Activated CD8-positive, alpha-beta memory T cell treated with anti-CD3 and anti-CD28 coated beads, Interleukin-2, amount 10 ng/mL, durations not matched to agents 7 days and 5 days (primary cell): ENCODE measurements at regions of chr3 and their contacts with region 1.

Region 1: GRCh38 chr3:12175844-12176453 is 17.2 kb upstream of the TIMP4 start:
- DNase-seq: peak; percentile 59
- ATAC-seq: peak; percentile 67
- H3K4me3 Mint-ChIP-seq: no peak overlapping the region
- H3K27ac Mint-ChIP-seq: no peak overlapping the region
- H3K4me1 Mint-ChIP-seq: peaks cover 6% of the 10 kb centered on the region
- H3K27me3 Mint-ChIP-seq: peaks cover under 1% of the 10 kb centered on the region

Region 2: DNA sequence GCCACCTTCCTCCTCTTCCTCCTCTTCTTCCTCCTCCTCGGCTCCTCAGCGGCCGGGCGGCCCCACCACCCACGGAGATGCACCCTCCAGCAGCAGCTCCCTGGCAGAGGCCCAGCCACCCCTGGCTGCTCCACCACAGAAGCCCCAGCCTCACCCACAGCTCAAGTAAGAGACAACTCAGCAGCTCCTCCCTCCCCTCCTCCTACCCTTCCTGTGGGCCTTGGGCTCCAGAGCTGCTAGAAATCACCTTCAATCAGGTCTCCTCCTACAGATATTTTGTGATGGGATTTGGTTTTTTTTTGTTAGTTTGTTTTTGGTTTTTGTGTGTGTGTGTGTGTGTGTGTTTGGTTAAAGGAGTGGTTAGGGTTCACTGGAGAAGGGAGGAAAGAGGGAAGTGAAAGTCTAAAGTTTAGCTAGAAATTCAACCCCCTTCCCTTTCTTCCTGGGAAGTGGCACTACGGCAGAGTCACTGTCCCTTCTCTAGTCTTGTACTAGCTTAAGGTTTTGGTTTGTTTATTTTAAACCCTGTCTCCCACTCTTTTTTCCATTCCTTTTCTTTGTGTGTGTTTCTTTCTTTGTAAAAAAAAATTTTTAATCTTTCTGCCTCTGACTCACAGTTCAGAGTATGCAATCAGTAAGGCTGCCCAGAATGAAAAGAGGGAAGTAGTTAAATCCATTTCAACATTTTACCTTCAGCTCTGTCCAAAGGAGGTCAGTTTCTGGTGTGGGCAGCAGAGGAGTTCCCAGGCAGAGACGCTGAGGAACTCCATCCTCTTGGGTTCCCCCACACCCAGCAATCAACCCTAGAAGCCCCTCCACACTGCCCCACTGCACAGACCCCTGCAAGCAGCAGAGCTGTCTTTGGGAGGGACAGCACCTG is 11.7 kb after region 1 on chr3:
- CTCF ChIA-PET with region 1: interaction called, 18 read pairs
- DNase-seq: peak; percentile 89
- ATAC-seq: peak; percentile 95
- H3K4me3 Mint-ChIP-seq: peak overlapping the region; percentile 61
- H3K27ac Mint-ChIP-seq: peak overlapping the region; percentile 92
- H3K4me1 Mint-ChIP-seq: peaks cover 45% of the 10 kb centered on the region
- H3K27me3 Mint-ChIP-seq: peaks cover 3% of the 10 kb centered on the region

Region 3: DNA sequence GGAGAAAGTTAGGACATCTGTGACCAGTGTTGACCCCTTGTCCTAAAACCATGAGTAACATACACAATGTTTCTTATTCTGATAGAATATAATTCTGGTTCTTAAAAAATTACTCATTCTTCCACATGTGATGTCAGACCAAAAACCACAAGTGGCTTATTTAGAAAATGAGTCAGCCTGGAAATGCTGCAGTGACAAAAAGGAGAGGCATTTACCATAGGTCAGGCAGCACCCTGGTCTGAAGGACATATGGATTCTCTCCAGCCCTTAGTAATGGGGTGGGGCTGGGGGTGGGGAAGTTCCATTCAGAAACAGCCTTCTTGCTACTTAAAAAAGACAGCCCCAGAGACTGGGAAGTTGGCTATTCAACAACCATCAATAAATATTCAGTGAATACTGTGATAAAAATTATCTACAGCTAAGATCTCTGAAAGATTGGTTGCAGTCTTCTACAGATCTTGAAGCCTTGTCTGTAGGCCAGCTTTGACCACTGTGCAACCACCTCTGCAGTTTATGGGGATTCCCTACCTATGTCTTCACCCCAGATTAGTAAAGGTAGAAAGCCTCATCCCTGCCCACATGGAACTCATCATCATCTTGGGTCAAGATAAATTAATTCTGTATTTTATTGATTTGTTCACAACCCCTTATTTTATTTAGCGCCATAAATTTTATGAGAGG is 17.7 kb after region 1 on chr3:
- CTCF ChIA-PET with region 1: interaction called, 25 read pairs
- DNase-seq: peak; percentile 72
- ATAC-seq: peak; percentile 74
- H3K4me3 Mint-ChIP-seq: peak overlapping the region; percentile 4
- H3K27ac Mint-ChIP-seq: peak overlapping the region; percentile 90
- H3K4me1 Mint-ChIP-seq: peaks cover 61% of the 10 kb centered on the region
- H3K27me3 Mint-ChIP-seq: peaks cover 2% of the 10 kb centered on the region

Region 4: GRCh38 chr3:12246497-12247163 is 70.7 kb after region 1 on chr3:
- CTCF ChIA-PET with region 1: no interaction called
- DNase-seq: no peak
- ATAC-seq: no peak
- H3K4me3 Mint-ChIP-seq: no peak overlapping the region
- H3K27ac Mint-ChIP-seq: no peak overlapping the region
- H3K4me1 Mint-ChIP-seq: peaks cover 11% of the 10 kb centered on the region
- H3K27me3 Mint-ChIP-seq: peaks cover 29% of the 10 kb centered on the region

Region 5: DNA sequence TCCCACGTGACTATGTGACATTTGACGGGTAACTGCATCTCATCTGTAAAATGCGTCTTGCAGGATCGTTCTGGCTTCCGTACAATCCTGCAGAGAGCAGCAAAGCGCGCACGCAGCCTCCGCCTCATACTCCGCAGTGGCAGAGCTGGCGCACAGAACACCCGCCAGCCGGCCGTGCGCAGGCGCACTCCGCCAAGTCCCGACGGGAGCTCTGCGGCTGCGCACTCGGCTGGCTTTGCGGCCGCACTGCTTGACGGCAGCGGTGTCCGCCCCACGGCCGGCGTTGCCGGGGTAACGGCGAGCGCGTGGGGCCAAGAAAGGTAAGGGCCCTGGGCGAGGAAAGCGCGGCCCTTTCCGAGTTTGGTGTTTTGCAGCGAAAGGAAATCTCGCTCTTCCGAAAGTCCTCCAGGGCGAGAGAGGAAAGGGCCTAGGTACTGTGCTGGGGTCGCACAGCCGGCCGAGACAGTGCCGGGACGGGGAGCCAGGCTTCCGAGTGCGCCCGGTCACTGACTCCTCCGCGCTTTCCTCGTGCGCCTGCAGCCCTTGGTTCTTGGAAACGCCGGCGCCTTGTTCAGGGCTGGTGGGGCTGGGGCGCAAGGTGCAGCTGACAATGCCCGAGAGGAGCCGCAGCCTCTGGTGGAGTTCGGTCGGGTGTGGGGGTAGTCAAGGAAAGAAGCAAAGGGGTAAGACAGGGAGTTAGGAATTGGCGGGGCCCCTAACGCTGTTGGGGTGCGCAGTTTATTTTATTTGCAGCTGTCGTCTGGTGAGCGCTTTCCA is 308.4 kb after region 1 on chr3 and contains the start of gene TSEN2:
- CTCF ChIA-PET with region 1: interaction called, 15 read pairs
- DNase-seq: peak; percentile 97
- ATAC-seq: peak; percentile 98
- H3K4me3 Mint-ChIP-seq: peak within 1 kb of the TSS; percentile 95
- H3K27ac Mint-ChIP-seq: peak within 1 kb of the TSS; percentile 92
- H3K4me1 Mint-ChIP-seq: peaks cover 31% of the 10 kb centered on the region
- H3K27me3 Mint-ChIP-seq: no peaks in the 10 kb centered on the region
- total RNA-seq, gene TSEN2: 12.6 to 13.0 TPM